Tibial artery (tissue), 4 donors: ENCODE measurements at regions of chr5 and their contacts with region 1.

Region 1: DNA sequence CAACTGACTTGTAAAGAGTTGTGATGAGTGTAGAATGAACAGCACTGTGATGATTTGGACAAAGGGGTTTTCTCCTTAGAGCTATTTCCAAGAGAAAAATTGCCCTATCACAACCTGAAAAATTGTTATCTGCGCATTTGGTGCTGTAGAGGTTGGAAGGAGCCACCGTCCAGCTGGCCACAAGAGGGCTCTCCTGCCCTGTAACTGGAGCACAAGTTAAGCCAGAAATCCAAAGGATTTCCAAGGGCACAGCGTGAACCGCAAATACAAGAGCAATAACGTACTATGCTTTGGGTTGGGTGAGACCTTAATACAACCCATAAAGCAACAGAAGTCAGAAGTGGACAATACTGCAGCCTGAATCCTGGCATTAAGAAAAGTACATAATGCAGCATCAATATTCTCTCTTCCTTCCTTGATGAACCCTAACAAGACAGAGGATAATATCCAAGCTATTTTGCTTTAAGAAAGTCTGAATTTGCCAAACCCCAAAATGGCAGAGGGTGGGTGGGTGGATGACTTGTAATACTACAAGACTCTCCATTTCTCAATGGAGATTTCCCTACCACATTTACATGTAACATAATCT is 56.8 kb upstream of the SMIM32 start:
- DNase-seq: peak in 1 of 2 donors; percentile 43
- H3K4me3 ChIP-seq: no peak overlapping the region
- H3K27ac ChIP-seq: no peak overlapping the region
- H3K4me1 ChIP-seq: peaks cover 0 to 14% (median 2%) of the 10 kb centered on the region in 4 donors
- H3K27me3 ChIP-seq: no peaks in the 10 kb centered on the region
- CTCF ChIP-seq: peak; percentile 58 to 76

Region 2: GRCh38 chr5:136424835-136425584 is 175.2 kb after region 1 on chr5:
- intact Hi-C with region 1: loop called (anchors 2 kb)
- DNase-seq: peak; percentile 61 to 71
- H3K4me3 ChIP-seq: no peak overlapping the region
- H3K27ac ChIP-seq: no peak overlapping the region
- H3K4me1 ChIP-seq: no peaks in the 10 kb centered on the region
- H3K27me3 ChIP-seq: no peaks in the 10 kb centered on the region
- CTCF ChIP-seq: peak; percentile 41 to 51

Region 3: GRCh38 chr5:136769900-136770684 is 520.3 kb after region 1 on chr5:
- intact Hi-C with region 1: loop called (anchors 5 kb)
- DNase-seq: peak; percentile 70 to 79
- H3K4me3 ChIP-seq: no peak overlapping the region
- H3K27ac ChIP-seq: no peak overlapping the region
- H3K4me1 ChIP-seq: no peaks in the 10 kb centered on the region
- H3K27me3 ChIP-seq: no peaks in the 10 kb centered on the region
- CTCF ChIP-seq: peak; percentile 63 to 70